ENCODE measurements at regions of chr6 and their contacts with region 1.

Region 1: DNA sequence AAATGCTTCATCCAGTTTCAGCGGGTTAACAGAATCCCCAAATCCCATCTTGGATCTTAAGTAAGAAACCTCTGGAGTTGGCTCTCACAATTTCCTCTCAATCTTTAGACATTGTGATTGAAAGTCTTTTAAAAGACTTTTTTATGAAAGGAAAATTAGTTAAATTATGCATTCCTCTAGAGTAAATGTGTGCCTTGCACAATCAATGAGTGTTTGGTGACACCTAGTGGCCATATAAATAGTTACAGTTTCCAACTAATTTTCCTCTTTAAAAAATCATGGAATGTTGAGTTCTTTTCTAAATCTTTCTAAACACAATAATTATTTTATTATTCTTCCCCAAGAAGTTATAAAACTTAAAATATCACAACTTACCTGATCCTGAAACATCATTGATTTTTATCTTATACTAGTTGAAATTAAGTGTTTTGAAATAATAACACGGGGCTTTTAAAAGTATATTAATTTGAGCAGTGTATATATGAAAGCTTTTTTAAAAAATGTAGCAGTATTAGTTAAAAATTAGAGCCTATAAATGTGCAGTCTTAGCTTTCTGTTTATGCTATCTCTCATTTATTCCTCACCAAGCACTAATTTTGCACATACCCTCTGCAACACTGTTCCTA is 66.4 kb downstream of the PKHD1 start:
- DNase-seq: no peak
- H3K4me3 ChIP-seq: no peak overlapping the region
- H3K27ac ChIP-seq: no peak overlapping the region
- H3K4me1 ChIP-seq: no peaks in the 10 kb centered on the region
- H3K27me3 ChIP-seq: no peaks in the 10 kb centered on the region
- CTCF ChIP-seq: peak; percentile 55 to 77 (median 64)

Region 2: DNA sequence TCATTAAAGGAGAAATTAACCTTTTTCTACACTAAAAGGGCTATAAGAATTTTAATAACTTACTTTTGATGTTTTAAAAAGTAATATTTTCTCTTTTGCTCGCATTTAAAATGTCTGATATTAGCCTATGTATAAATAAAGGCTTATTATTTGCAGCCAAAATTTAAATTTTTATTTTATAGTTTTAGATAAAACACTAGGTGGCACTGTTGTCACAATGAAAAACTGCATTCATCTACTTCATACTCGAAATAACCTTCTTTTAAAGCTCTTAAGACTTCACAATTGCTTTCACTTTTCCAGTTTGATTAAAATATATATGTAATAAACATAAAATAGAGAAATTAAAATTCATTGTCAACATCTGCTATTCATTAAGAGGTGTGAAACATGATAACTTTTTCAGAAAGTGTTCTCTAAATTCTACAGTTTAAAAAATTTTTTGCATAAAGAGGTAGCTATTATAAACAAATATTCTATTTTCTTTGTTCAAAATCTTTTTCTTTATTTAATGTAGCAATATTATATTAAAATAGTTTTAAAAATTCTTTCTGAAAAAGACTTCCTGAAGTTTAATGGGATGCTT is 1892.5 kb before region 1 on chr6:
- intact Hi-C with region 1: loop called (anchors 5 kb)
- DNase-seq: no peak
- H3K4me3 ChIP-seq: no peak overlapping the region
- H3K27ac ChIP-seq: no peak overlapping the region
- H3K4me1 ChIP-seq: no peaks in the 10 kb centered on the region
- H3K27me3 ChIP-seq: no peaks in the 10 kb centered on the region
- CTCF ChIP-seq: peak in 2 of 3 experiments; percentile 20 to 44

Region 3: GRCh38 chr6:50816115-50816675 is 1204.9 kb before region 1 on chr6:
- intact Hi-C with region 1: loop called (anchors 2 kb)
- DNase-seq: no peak
- H3K4me3 ChIP-seq: peak overlapping the region; percentile 26 to 45
- H3K27ac ChIP-seq: no peak overlapping the region
- H3K4me1 ChIP-seq: peaks cover 0 to 5% of the 10 kb centered on the region in 2 donors
- H3K27me3 ChIP-seq: peaks cover 8% of the 10 kb centered on the region
- CTCF ChIP-seq: peak; percentile 36 to 73 (median 54)

Region 4: GRCh38 chr6:51855310-51856082 is 165.6 kb before region 1 on chr6:
- intact Hi-C with region 1: loop called (anchors 10 kb)
- DNase-seq: no peak
- H3K4me3 ChIP-seq: no peak overlapping the region
- H3K27ac ChIP-seq: no peak overlapping the region
- H3K4me1 ChIP-seq: peaks cover 0 to 2% of the 10 kb centered on the region in 2 donors
- H3K27me3 ChIP-seq: no peaks in the 10 kb centered on the region
- CTCF ChIP-seq: peak; percentile 14 to 50 (median 34)